MCF 10A (cell line): ENCODE measurements at regions of chr16 and their contacts with region 1.

Region 1: DNA sequence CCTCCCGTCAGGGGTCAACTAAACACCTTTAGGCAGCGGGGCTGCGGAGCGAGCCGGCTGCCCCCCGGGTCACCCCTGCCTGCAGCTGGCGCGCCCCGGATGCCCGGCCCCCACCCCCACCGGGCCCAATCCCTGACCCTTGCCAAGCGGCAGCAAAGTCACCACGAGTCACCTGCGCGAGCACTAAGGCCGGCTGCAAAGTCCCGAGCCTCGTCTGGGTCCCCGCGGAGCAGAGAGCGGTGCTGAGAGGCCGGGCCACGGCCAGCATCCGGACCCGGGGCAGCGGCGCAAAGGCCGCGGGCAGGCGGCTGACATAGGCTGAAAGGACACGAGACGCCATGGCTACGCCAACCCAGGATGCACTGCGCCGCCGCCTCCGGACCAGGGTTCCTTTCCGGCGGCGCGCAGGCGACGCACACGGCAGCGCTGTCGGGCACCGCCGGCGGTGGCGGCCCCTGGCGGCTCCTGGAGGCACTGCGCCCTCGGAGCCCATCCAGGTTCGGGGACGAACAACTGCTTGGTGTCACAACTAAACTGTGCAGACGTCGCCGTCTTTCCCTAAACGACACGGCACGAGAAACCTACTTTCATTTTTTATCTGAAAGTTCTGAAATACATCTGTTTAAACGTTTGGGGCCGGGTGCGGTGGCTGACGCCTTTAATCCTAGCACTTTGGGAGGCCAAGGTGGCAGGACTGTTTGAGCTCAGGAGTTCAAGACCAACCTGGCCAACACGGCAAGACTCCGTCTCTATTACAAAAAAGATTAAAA is at the start of gene NDUFAB1:
- DNase-seq: peak; percentile 87
- H3K4me3 Mint-ChIP-seq: peak within 1 kb of the TSS; percentile 74
- H3K27ac Mint-ChIP-seq: peak within 1 kb of the TSS; percentile 51
- H3K4me1 Mint-ChIP-seq: peaks cover 15% of the 10 kb centered on the region
- H3K27me3 Mint-ChIP-seq: no peaks in the 10 kb centered on the region
- CTCF ChIP-seq: peak; percentile 97
- total RNA-seq, gene NDUFAB1: 98.3 and 112 TPM in 2 replicates

Region 2: DNA sequence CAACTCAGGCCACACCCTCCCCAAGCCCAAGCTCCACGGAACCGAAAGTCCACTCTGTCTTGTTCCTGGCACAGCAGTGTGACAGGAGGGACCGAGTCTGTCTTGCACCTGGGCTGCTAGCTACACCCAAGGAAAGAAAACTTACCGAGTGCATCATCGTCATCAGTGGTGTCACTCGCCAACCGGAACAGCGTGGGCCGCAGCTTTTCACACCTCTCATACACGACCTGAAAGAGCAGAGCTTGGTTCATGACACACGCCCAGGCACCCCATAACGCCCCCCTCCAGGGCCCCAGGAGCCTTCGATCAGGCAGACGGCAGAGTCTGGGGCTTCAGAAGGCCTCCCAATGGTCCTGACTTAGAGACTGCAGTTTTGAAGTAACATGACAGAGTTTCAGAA is 113.4 kb before region 1 on chr16:
- CTCF ChIA-PET with region 1: no interaction called
- POLR2A ChIA-PET with region 1: no interaction called
- intact Hi-C with region 1: no loop called
- DNase-seq: no peak
- H3K4me3 Mint-ChIP-seq: no peak overlapping the region
- H3K27ac Mint-ChIP-seq: no peak overlapping the region
- H3K4me1 Mint-ChIP-seq: no peaks in the 10 kb centered on the region
- H3K27me3 Mint-ChIP-seq: no peaks in the 10 kb centered on the region
- CTCF ChIP-seq: no peak

Region 3: GRCh38 chr16:23640931-23641765 is 45.0 kb after region 1 on chr16 and contains the starts of genes DCTN5 and PALB2:
- CTCF ChIA-PET with region 1: interaction called, 4 read pairs
- POLR2A ChIA-PET with region 1: interaction called, 10 read pairs
- intact Hi-C with region 1: no loop called
- DNase-seq: peak; percentile 95
- H3K4me3 Mint-ChIP-seq: peak within 1 kb of the TSS; percentile 91
- H3K27ac Mint-ChIP-seq: peak within 1 kb of the TSS; percentile 91
- H3K4me1 Mint-ChIP-seq: peaks cover 12% of the 10 kb centered on the region
- H3K27me3 Mint-ChIP-seq: no peaks in the 10 kb centered on the region
- CTCF ChIP-seq: no peak
- total RNA-seq, gene DCTN5: 66.6 and 84.8 TPM in 2 replicates
- total RNA-seq, gene PALB2: 13.7 and 20.8 TPM in 2 replicates